ENCODE measurements at regions of chr2 and their contacts with region 1.

Region 1: GRCh38 chr2:197071213-197071612 is 144.7 kb upstream of the PGAP1 start:
- DNase-seq: no peak
- ATAC-seq: no peak
- H3K4me3 ChIP-seq: no peak overlapping the region
- H3K4me3 Mint-ChIP-seq: peak overlapping the region in 3 of 10 donors; percentile 2 to 14 (median 8)
- H3K27ac ChIP-seq: no peak overlapping the region
- H3K27ac Mint-ChIP-seq: peak overlapping the region; percentile 12 to 87 (median 54)
- H3K4me1 ChIP-seq: peaks cover 0 to 6% of the 10 kb centered on the region in 2 donors
- H3K4me1 Mint-ChIP-seq: peaks cover 10 to 80% (median 74%) of the 10 kb centered on the region in 7 donors
- H3K27me3 ChIP-seq: no peaks in the 10 kb centered on the region
- H3K27me3 Mint-ChIP-seq: no peaks in the 10 kb centered on the region

Region 2: DNA sequence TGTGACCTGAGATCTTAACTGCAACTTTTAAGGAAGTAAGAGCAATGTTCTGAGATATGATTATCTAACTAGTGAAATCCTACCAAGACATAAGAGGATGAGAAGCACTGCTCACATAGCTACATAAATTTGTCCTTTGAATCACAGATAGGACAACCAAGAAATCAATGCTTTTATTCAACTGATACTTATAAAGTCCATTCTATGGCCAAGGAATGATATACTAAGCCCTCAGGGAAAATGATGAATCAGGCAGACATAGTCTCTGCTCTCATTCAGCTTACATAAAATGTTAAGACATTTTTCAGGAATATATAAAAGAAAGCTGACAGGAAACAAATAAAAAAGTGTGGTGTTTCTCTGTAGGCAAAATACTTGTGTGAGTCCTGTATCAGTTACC is 183.8 kb before region 1 on chr2:
- CTCF ChIA-PET with region 1: no interaction called
- POLR2A ChIA-PET with region 1: no interaction called
- intact Hi-C with region 1: no loop called
- DNase-seq: no peak
- ATAC-seq: no peak
- H3K4me3 ChIP-seq: no peak overlapping the region
- H3K4me3 Mint-ChIP-seq: no peak overlapping the region
- H3K27ac ChIP-seq: no peak overlapping the region
- H3K27ac Mint-ChIP-seq: no peak overlapping the region
- H3K4me1 ChIP-seq: no peaks in the 10 kb centered on the region
- H3K4me1 Mint-ChIP-seq: peaks cover 0 to 9% (median 0%) of the 10 kb centered on the region in 7 donors
- H3K27me3 ChIP-seq: no peaks in the 10 kb centered on the region
- H3K27me3 Mint-ChIP-seq: no peaks in the 10 kb centered on the region

Region 3: GRCh38 chr2:197057959-197058358 is 13.3 kb before region 1 on chr2:
- CTCF ChIA-PET with region 1: interaction called, 4 read pairs
- POLR2A ChIA-PET with region 1: interaction called, 4 read pairs
- intact Hi-C with region 1: loop called in 1 of 2 experiments (anchors 2 kb)
- DNase-seq: no peak
- ATAC-seq: no peak
- H3K4me3 ChIP-seq: no peak overlapping the region
- H3K4me3 Mint-ChIP-seq: no peak overlapping the region
- H3K27ac ChIP-seq: no peak overlapping the region
- H3K27ac Mint-ChIP-seq: peak overlapping the region in 2 of 9 donors; percentile 4 to 60
- H3K4me1 ChIP-seq: peaks cover 0 to 3% of the 10 kb centered on the region in 2 donors
- H3K4me1 Mint-ChIP-seq: peaks cover 7 to 28% (median 20%) of the 10 kb centered on the region in 7 donors
- H3K27me3 ChIP-seq: no peaks in the 10 kb centered on the region
- H3K27me3 Mint-ChIP-seq: no peaks in the 10 kb centered on the region

Measured in naive thymus-derived CD4-positive, alpha-beta T cell (primary cell).